Spleen (tissue), 13 donors: ENCODE measurements at regions of chr19 and their contacts with region 1.

Region 1: GRCh38 chr19:38634757-38635482 is 12.5 kb upstream of the ACTN4 start:
- DNase-seq: peak; percentile 94
- H3K4me3 ChIP-seq: no peak overlapping the region
- H3K27ac ChIP-seq: peak overlapping the region in 6 of 8 donors; percentile 23 to 84 (median 52)
- H3K4me1 ChIP-seq: peaks cover 14 to 38% (median 31%) of the 10 kb centered on the region in 6 donors
- H3K27me3 ChIP-seq: no peaks in the 10 kb centered on the region
- CTCF ChIP-seq: peak; percentile 91 to 99 (median 97)
- POLR2A ChIP-seq: no peak

Region 2: GRCh38 chr19:38402967-38403861 is 231.7 kb before region 1 on chr19 and contains the start of gene FAM98C:
- intact Hi-C with region 1: loop called (anchors 5 kb)
- DNase-seq: peak; percentile 98
- H3K4me3 ChIP-seq: peak within 1 kb of the TSS; percentile 64 to 98 (median 86)
- H3K27ac ChIP-seq: peak within 1 kb of the TSS; percentile 80 to 95 (median 92)
- H3K4me1 ChIP-seq: peaks cover 7 to 28% (median 18%) of the 10 kb centered on the region in 6 donors
- H3K27me3 ChIP-seq: peaks cover 0 to 28% (median 16%) of the 10 kb centered on the region in 7 donors
- CTCF ChIP-seq: peak; percentile 99 to 100 (median 100)
- POLR2A ChIP-seq: no peak
- total RNA-seq, gene FAM98C: 18.0 to 26.1 (median 20.4) TPM

Region 3: GRCh38 chr19:38514812-38515633 is 119.9 kb before region 1 on chr19:
- intact Hi-C with region 1: loop called (anchors 10 kb)
- DNase-seq: peak; percentile 93
- H3K4me3 ChIP-seq: peak overlapping the region in 1 of 8 donors; percentile 35
- H3K27ac ChIP-seq: peak overlapping the region in 1 of 8 donors; percentile 3
- H3K4me1 ChIP-seq: peaks cover 0 to 13% (median 9%) of the 10 kb centered on the region in 6 donors
- H3K27me3 ChIP-seq: peaks cover 0 to 34% (median 0%) of the 10 kb centered on the region in 7 donors
- CTCF ChIP-seq: peak; percentile 62 to 92 (median 83)
- POLR2A ChIP-seq: no peak

Region 4: GRCh38 chr19:38544959-38545315 is 90.0 kb before region 1 on chr19:
- intact Hi-C with region 1: loop called (anchors 5 kb)
- DNase-seq: no peak
- H3K4me3 ChIP-seq: no peak overlapping the region
- H3K27ac ChIP-seq: peak overlapping the region in 3 of 8 donors; percentile 28 to 48 (median 39)
- H3K4me1 ChIP-seq: peaks cover 9 to 25% (median 19%) of the 10 kb centered on the region in 6 donors
- H3K27me3 ChIP-seq: no peaks in the 10 kb centered on the region
- CTCF ChIP-seq: no peak
- POLR2A ChIP-seq: no peak

Region 5: GRCh38 chr19:38929929-38930775 is 295.2 kb after region 1 on chr19 and contains the start of gene SARS2:
- intact Hi-C with region 1: loop called (anchors 10 kb)
- DNase-seq: peak; percentile 98
- H3K4me3 ChIP-seq: peak within 1 kb of the TSS; percentile 51 to 82 (median 72)
- H3K27ac ChIP-seq: peak within 1 kb of the TSS; percentile 81 to 93 (median 88)
- H3K4me1 ChIP-seq: peaks cover 16 to 76% (median 40%) of the 10 kb centered on the region in 6 donors
- H3K27me3 ChIP-seq: no peaks in the 10 kb centered on the region
- CTCF ChIP-seq: peak; percentile 99 to 100 (median 100)
- POLR2A ChIP-seq: no peak
- total RNA-seq, gene SARS2: 12.5 to 37.4 (median 24.6) TPM